Mammary epithelial cell (primary cell): ENCODE measurements at regions of chr5 and their contacts with region 1.

Region 1: DNA sequence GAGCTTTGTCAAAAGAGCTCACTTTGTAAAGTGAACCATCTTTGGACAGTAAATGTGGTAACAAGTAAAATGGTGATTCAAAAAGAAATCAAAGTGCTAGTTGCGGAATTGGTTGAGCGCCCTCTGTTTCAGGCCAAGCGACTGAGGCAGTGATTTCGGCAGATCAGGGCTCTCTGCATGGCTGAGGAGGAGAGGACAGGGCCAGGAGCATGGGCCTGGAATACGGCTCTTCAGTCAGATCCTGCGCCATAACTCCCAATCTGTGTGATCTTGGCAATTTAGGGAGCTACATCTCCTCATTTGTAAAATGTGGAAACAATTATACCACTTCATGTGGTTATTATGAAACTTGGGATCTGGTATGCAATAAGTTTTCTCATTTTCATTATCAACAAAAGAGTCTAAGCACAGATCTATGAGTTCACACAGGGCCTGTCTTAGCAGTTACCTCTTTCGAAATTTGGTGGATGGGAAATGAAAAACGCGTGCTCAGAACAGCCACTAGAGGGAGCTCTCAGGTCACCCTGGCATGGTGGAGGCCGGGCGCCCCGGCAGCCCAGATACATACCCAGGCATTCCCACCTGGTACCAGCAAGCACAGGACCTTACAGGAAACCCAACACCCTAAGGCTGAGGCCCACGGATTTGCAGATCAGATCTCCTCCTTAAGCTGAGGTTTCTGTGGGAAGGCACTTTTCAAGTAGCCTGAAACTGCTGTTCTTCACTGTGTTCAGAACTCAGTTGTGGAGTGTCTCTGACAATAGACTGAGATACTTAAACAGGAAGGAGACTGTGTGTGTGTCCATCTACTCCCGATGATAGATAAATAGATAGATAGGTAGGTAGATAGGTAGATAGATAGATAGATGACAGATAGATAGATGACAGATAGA is 303.7 kb downstream of the RAB3C start:
- DNase-seq: peak; percentile 62
- H3K4me3 ChIP-seq: no peak overlapping the region
- H3K27ac ChIP-seq: no peak overlapping the region
- H3K4me1 ChIP-seq: peaks cover 5% of the 10 kb centered on the region
- H3K27me3 ChIP-seq: peaks cover 2% of the 10 kb centered on the region
- CTCF ChIP-seq: peak; percentile 85 to 97

Region 2: DNA sequence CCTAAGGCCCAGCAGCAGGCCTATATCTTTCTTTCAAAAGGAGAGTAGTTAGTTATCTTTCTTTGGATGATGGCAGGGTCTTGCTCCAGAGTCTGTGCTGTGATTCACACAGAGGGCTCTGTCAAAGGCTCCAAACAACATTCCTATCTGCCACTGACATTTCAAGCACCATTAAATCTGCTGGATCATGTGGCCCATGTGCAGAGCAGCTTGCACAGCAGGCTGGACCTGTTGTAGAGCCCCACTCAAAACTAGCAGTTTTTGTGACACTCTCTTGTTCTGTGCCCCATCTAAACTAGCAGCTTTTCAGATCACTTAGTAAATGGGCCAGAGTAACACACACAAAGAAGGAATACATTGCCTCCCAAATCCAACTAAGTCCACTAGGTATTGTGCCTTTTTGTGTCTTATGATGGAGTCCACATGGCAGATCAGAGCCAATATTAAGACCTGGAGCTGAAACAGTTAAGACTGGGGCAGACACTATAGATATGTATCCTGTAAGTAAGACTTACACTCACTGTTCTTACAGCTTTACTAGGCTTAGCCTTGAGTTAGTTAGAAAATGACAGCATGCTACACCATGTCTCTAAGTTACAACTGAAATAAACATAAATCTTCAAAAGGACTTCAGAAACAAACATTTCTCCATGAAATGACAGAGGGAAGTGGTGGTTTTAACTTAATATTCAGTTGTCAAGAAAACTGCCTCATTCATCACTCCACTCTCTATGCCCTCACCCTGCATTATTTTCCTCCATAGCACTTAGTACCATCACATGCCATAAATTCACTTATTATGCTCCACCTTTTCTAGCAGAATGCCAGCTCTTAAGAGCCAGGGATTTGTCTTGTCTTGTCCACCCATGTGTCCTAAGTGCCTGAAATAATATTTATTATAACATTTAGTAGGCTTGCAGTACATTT is 97.2 kb after region 1 on chr5:
- CTCF ChIA-PET with region 1: interaction called, 3 read pairs
- dilution Hi-C with region 1: no loop called
- in situ Hi-C with region 1: loop called in 1 of 2 experiments (anchors 10 kb)
- intact Hi-C with region 1: no loop called
- DNase-seq: no peak
- H3K4me3 ChIP-seq: no peak overlapping the region
- H3K27ac ChIP-seq: no peak overlapping the region
- H3K4me1 ChIP-seq: peaks cover 5% of the 10 kb centered on the region
- H3K27me3 ChIP-seq: no peaks in the 10 kb centered on the region
- CTCF ChIP-seq: no peak

Region 3: GRCh38 chr5:59007460-59008063 is 121.0 kb after region 1 on chr5:
- CTCF ChIA-PET with region 1: interaction called, 5 read pairs
- dilution Hi-C with region 1: no loop called
- in situ Hi-C with region 1: loop called in 1 of 2 experiments (anchors 5 kb)
- intact Hi-C with region 1: loop called (anchors 1 kb)
- DNase-seq: no peak
- H3K4me3 ChIP-seq: no peak overlapping the region
- H3K27ac ChIP-seq: no peak overlapping the region
- H3K4me1 ChIP-seq: no peaks in the 10 kb centered on the region
- H3K27me3 ChIP-seq: no peaks in the 10 kb centered on the region
- CTCF ChIP-seq: peak; percentile 40 to 53

Region 4: DNA sequence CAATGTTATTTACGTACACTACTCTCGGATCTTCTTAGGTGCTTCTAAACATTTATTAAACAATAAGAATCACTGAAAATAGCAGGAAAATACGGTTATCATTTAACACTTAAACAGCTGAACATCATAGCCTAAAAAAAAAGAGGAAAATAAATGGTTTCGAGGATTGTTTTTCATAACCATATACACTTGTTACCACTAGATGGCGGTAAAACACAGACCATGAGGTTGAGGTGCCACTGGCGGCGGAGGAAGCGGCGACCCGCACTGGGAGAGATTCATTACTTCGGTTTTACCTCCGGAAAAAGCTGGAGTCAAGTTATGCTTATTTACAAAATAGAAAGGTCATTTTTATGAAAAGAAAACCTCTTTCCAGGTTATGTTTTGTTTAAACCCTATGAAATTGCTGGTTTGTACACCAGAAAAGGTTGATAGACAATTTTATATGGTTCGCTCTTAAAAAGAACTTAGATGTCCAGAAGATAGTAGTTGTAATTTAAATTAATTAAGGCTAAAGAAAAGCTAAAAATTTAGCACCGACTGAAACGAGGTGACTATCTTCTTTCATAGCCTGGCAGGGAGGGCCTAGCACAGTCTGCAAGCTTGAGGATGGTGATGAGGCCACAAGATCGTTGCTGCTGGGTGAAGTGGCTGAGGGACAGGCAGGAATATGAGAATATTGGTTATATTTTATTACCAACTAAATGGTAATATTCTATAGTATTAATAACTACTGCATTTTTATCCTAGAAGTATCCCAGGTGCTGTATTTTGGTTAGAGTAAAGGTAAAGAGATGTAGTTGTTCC is 302.1 kb after region 1 on chr5:
- CTCF ChIA-PET with region 1: no interaction called
- dilution Hi-C with region 1: no loop called
- in situ Hi-C with region 1: no loop called
- intact Hi-C with region 1: loop called (anchors 5 kb)
- DNase-seq: peak; percentile 40
- H3K4me3 ChIP-seq: no peak overlapping the region
- H3K27ac ChIP-seq: no peak overlapping the region
- H3K4me1 ChIP-seq: peaks cover 5% of the 10 kb centered on the region
- H3K27me3 ChIP-seq: no peaks in the 10 kb centered on the region
- CTCF ChIP-seq: peak; percentile 54 to 70

Region 5: DNA sequence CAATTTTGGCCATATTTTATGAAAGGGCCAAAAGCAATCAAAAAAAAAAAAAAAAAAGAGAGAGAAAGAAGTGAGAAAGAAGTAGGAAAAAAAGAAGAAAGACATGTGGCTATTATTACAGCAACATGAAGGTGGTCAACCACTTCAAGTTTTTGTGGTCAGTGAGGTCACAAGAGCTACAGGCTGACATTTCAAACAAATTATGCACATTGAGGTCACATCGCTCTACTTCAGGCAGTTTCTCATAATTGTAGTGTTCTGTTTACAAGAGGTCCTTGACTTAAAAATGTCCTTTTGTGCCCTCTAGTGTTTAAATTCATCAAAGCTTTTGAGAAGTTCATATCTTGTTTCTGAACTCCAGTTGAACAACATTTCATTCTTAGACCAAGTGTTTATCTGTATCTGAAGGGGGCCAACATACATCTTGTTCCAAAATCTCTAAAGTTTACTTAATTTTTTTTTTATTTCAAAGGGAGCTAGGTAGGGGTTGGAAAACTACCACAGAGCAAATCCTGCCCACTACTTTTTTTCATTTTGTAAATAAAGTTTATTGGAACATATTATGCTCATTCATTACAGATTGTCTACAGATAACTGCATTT is 493.9 kb after region 1 on chr5:
- CTCF ChIA-PET with region 1: no interaction called
- dilution Hi-C with region 1: no loop called
- in situ Hi-C with region 1: loop called in 1 of 2 experiments (anchors 25 kb)
- intact Hi-C with region 1: loop called (anchors 5 kb)
- DNase-seq: peak; percentile 71
- H3K4me3 ChIP-seq: no peak overlapping the region
- H3K27ac ChIP-seq: no peak overlapping the region
- H3K4me1 ChIP-seq: peaks cover 2% of the 10 kb centered on the region
- H3K27me3 ChIP-seq: no peaks in the 10 kb centered on the region
- CTCF ChIP-seq: peak; percentile 47 to 50